ENCODE measurements at regions of chr2 and their contacts with region 1.

Region 1: GRCh38 chr2:181715033-181715630 is 34.8 kb upstream of the NEUROD1 start:
- DNase-seq: peak in 1 of 2 donors; percentile 65
- ATAC-seq: peak in 4 of 8 donors; percentile 59 to 68 (median 66)
- H3K4me3 ChIP-seq: no peak overlapping the region
- H3K27ac ChIP-seq: no peak overlapping the region
- H3K4me1 ChIP-seq: no peaks in the 10 kb centered on the region
- H3K27me3 ChIP-seq: peaks cover 0 to 9% (median 0%) of the 10 kb centered on the region in 7 donors
- CTCF ChIP-seq: peak; percentile 26 to 76 (median 70)

Region 2: GRCh38 chr2:181077128-181077709 is 637.9 kb before region 1 on chr2:
- intact Hi-C with region 1: loop called in 2 of 10 experiments (anchors 10 kb)
- DNase-seq: no peak
- ATAC-seq: peak in 4 of 8 donors; percentile 52 to 75 (median 60)
- H3K4me3 ChIP-seq: no peak overlapping the region
- H3K27ac ChIP-seq: no peak overlapping the region
- H3K4me1 ChIP-seq: peaks cover 0 to 28% (median 11%) of the 10 kb centered on the region in 9 donors
- H3K27me3 ChIP-seq: no peaks in the 10 kb centered on the region
- CTCF ChIP-seq: peak; percentile 39 to 80 (median 73)

Region 3: DNA sequence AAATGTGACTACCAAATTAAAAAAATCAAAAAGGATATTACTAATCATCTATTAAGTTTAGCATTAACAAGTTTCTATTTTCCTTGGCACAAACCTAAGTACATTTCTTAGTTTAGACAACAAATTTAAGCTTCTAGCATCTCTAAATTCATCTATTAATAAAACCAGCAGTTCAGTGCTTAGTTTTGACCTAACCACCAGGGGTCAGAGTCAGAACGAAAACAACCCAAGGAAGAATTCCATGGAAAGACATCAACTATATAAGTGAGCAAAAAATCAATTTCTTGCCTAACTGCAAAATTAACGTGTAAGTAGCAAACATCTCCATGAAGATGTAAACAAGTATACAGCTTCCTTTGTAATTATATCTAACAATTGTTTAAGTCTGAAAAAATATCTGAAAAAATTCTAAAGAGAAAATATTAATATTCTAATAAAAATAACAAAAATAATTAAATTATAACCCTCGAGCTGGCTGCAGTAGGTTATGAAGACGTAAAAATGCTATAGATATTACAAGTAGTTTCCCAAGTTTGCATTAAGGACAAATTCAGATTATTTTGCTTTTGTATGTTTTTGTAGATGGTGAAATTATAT is 141.9 kb before region 1 on chr2:
- intact Hi-C with region 1: loop called in 8 of 10 experiments (anchors 2 to 10 kb)
- DNase-seq: no peak
- ATAC-seq: no peak
- H3K4me3 ChIP-seq: no peak overlapping the region
- H3K27ac ChIP-seq: no peak overlapping the region
- H3K4me1 ChIP-seq: no peaks in the 10 kb centered on the region
- H3K27me3 ChIP-seq: peaks cover 0 to 16% (median 0%) of the 10 kb centered on the region in 7 donors
- CTCF ChIP-seq: peak in 8 of 9 donors; percentile 16 to 48 (median 42)

Region 4: GRCh38 chr2:182240862-182241371 is 525.8 kb after region 1 on chr2:
- intact Hi-C with region 1: no loop called
- DNase-seq: no peak
- ATAC-seq: peak; percentile 43 to 75 (median 66)
- H3K4me3 ChIP-seq: no peak overlapping the region
- H3K27ac ChIP-seq: peak overlapping the region in 2 of 10 donors; percentile 49 to 50
- H3K4me1 ChIP-seq: peaks cover 0 to 22% (median 9%) of the 10 kb centered on the region in 9 donors
- H3K27me3 ChIP-seq: no peaks in the 10 kb centered on the region
- CTCF ChIP-seq: peak in 6 of 9 donors; percentile 32 to 53 (median 48)

Region 5: DNA sequence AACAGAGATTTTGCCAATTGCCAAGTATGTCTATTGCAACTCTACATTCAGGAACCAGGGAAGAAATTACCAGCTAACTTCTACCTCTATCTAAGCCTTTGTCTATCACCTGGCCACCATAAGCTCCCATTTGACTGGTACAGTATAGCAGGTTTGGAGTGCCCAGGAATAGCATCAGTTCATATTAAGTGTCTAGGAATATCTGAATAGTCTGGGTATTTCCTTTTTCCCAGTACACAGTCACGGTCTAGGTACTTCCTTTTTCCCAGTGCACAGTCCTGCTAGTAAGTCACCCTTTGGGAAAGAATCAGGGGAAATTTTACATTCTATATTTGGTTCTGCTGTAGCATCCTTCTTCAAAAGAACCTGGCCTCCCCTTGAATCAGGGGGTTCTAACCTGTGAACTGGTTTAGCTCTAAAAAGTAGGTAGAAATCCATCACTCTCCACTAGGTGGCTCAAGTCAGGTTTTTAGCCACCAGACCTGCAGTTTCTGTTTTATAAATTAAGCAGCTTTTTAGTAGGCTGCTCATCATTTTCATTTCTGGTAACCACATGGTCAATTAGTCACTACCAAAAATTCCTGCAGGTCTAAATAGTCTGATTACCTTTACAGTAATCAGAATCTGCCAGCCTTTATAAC is 951.7 kb after region 1 on chr2:
- intact Hi-C with region 1: no loop called
- DNase-seq: no peak
- ATAC-seq: peak in 2 of 8 donors; percentile 29 to 33
- H3K4me3 ChIP-seq: no peak overlapping the region
- H3K27ac ChIP-seq: no peak overlapping the region
- H3K4me1 ChIP-seq: peaks cover 0 to 5% (median 0%) of the 10 kb centered on the region in 9 donors
- H3K27me3 ChIP-seq: no peaks in the 10 kb centered on the region
- CTCF ChIP-seq: peak in 6 of 9 donors; percentile 37 to 59 (median 50)

Measured in heart right ventricle (tissue), 16 donors.